Mammary epithelial cell (primary cell): ENCODE measurements at regions of chr9 and their contacts with region 1.

Region 1: DNA sequence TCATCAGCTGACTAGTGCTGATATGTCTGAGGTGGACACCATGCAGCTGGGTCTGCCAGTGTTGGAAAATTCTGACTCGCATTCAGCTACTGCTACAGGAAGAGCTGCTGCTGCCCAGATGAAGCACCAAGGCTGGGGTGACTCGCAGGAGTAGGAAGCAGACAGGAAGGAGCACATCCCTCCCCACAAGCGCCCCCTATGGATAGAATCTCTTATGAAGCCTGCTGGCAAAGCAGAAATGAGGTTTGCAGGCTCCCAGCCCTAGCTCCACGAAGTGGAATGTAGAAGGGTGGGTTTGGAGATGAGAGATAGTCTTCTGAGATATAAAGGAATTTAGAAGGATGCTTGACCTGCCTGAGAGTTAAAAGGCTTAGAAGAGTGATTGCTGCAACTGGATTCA is 443.0 kb downstream of the ACTL7B start:
- DNase-seq: peak; percentile 15
- H3K4me3 ChIP-seq: no peak overlapping the region
- H3K27ac ChIP-seq: no peak overlapping the region
- H3K4me1 ChIP-seq: no peaks in the 10 kb centered on the region
- H3K27me3 ChIP-seq: no peaks in the 10 kb centered on the region
- CTCF ChIP-seq: no peak

Region 2: DNA sequence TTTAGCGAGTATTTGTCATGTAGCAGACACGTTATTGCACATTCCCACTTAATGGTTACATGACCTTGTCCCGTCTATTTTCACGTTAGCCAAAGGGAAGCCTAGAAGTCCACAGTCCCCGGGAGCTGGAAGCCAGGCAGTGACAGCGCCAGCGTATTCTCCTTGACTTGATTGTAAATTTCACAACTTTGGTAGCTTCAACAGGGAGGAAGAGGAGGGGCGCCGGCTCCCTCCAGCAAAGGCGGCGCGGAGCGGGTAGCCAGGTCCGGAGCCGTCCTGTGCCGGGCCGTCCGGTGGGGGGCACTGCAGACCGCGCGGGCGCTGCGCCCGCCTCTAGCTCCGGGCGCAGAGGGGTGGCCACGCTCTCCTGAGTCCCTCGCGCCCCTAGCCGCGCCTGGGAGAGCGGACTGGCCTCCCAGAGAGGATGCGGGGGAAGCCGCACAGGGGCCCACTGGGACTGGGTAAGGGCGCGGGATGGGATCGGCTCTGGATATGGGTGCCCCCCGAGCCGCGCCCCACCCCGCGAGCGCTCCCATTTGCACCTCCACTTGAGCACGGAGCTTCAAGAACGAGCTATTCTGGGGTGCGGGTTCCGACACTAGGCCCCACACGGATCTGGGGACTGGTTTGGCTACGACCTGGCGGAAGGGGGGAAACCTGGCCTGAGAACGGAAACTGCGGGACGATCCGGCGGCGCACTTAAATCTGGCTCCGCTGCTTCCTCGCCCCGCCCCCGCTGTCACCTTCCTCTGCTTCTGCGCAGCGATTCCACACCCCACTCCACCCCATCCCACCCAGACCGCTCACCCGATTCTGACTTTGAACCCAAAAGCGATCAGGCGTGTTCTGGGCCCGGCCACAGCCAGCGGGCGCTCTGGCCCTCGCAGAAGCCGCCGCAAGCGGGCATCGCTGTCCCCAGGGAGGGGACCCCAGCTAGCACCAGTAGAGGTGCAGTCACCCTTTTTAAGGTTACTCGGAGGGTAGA is 947.0 kb before region 1 on chr9:
- CTCF ChIA-PET with region 1: interaction called, 4 read pairs
- dilution Hi-C with region 1: no loop called
- in situ Hi-C with region 1: loop called (anchors 25 kb)
- intact Hi-C with region 1: loop called (anchors 5 kb)
- DNase-seq: peak; percentile 50
- H3K4me3 ChIP-seq: peak overlapping the region; percentile 51 to 71 (median 59)
- H3K27ac ChIP-seq: no peak overlapping the region
- H3K4me1 ChIP-seq: peaks cover 11% of the 10 kb centered on the region
- H3K27me3 ChIP-seq: no peaks in the 10 kb centered on the region
- CTCF ChIP-seq: peak; percentile 63 to 83

Region 3: DNA sequence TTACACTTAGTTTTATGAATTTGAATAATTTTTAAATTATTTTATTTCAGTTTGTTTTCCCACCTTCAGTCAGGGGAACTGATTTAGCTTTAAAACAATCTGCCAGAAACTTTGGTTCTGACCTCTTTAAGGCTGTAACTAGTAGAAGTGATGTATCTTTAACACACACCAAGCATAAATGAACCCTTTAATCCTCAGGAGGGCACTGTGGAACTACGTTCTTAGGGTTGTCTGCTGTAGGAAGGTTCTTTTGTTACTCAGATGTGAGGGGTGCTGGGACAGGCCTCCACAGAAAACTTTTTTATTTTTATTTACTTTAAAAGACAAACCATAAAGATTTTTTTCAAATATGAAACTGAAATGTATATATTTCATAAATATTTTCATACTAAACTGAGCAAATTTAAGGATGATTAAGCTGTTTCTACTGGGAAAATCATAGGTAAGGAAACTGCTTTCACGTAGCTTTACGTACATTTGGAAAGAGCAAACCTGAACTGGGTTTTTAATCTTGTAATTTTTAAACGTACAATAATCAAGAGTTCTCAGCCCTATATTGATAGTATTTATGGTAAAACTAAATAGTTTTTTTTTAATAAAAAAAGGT is 928.5 kb before region 1 on chr9:
- CTCF ChIA-PET with region 1: no interaction called
- dilution Hi-C with region 1: no loop called
- in situ Hi-C with region 1: no loop called
- intact Hi-C with region 1: loop called (anchors 5 kb)
- DNase-seq: peak; percentile 60
- H3K4me3 ChIP-seq: no peak overlapping the region
- H3K27ac ChIP-seq: no peak overlapping the region
- H3K4me1 ChIP-seq: peaks cover 27% of the 10 kb centered on the region
- H3K27me3 ChIP-seq: no peaks in the 10 kb centered on the region
- CTCF ChIP-seq: peak; percentile 34 to 63

Region 4: DNA sequence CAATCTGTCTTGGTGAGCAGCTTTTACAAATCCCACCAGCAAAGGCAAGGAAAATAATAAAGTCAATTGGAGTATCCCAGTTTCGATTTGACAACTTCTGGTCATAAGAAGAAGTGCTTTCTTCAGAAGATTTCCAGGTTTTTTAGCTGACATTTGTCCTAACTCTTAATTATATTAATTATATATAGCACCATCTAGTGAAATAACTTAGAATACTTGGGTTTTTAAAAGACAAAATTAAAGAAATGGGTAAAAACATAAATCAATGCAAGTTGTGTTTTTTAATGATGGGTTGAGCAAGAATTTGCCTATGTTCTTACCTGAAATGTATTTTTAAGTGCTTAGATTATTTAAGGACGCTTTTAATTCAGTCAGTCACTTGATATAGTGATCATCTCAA is 21.3 kb after region 1 on chr9:
- CTCF ChIA-PET with region 1: interaction called, 13 read pairs
- dilution Hi-C with region 1: no loop called
- in situ Hi-C with region 1: no loop called
- intact Hi-C with region 1: no loop called
- DNase-seq: no peak
- H3K4me3 ChIP-seq: no peak overlapping the region
- H3K27ac ChIP-seq: no peak overlapping the region
- H3K4me1 ChIP-seq: no peaks in the 10 kb centered on the region
- H3K27me3 ChIP-seq: no peaks in the 10 kb centered on the region
- CTCF ChIP-seq: peak in 1 of 2 donors; percentile 2

Region 5: GRCh38 chr9:108478431-108478837 is 65.7 kb after region 1 on chr9:
- CTCF ChIA-PET with region 1: interaction called, 10 read pairs
- dilution Hi-C with region 1: no loop called
- in situ Hi-C with region 1: no loop called
- intact Hi-C with region 1: no loop called
- DNase-seq: peak; percentile 94
- H3K4me3 ChIP-seq: no peak overlapping the region
- H3K27ac ChIP-seq: peak overlapping the region; percentile 95
- H3K4me1 ChIP-seq: peaks cover 48% of the 10 kb centered on the region
- H3K27me3 ChIP-seq: no peaks in the 10 kb centered on the region
- CTCF ChIP-seq: peak in 1 of 2 donors; percentile 23

Region 6: DNA sequence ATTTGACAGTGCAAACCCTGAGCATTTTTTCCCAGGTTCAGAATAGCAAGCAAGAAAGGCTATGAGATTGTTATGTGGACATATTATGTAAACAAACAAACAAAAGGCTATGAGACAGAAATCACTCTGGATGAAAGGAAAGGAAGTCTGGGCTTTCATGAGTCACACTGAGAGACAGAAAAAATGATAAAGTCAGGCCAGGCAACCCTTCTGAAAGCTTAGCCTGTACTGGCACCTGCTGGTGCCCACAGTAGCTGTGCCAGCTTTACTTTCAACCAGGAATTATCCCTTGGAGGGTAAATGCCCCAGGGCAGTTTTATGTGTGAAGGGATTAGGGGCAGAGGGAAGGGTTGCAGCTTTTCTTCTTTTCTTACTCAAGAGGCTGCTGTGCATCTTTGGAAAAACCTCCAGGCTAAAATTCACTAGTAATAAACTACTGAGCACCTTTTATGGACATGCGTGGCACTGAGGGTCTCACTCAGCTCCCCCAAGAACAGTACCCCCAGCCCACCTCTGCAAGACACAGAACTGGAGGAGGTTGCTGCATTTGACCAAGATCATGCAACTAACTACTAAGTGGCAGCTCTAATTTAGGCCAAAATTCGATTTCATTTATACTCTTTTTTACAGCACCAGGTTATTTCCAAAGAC is 401.3 kb after region 1 on chr9:
- CTCF ChIA-PET with region 1: interaction called, 4 read pairs
- dilution Hi-C with region 1: no loop called
- in situ Hi-C with region 1: no loop called
- intact Hi-C with region 1: loop called (anchors 5 kb)
- DNase-seq: peak; percentile 71
- H3K4me3 ChIP-seq: no peak overlapping the region
- H3K27ac ChIP-seq: no peak overlapping the region
- H3K4me1 ChIP-seq: peaks cover 14% of the 10 kb centered on the region
- H3K27me3 ChIP-seq: no peaks in the 10 kb centered on the region
- CTCF ChIP-seq: peak; percentile 84 to 85